ENCODE measurements at regions of chr1 and their contacts with region 1.

Region 1: DNA sequence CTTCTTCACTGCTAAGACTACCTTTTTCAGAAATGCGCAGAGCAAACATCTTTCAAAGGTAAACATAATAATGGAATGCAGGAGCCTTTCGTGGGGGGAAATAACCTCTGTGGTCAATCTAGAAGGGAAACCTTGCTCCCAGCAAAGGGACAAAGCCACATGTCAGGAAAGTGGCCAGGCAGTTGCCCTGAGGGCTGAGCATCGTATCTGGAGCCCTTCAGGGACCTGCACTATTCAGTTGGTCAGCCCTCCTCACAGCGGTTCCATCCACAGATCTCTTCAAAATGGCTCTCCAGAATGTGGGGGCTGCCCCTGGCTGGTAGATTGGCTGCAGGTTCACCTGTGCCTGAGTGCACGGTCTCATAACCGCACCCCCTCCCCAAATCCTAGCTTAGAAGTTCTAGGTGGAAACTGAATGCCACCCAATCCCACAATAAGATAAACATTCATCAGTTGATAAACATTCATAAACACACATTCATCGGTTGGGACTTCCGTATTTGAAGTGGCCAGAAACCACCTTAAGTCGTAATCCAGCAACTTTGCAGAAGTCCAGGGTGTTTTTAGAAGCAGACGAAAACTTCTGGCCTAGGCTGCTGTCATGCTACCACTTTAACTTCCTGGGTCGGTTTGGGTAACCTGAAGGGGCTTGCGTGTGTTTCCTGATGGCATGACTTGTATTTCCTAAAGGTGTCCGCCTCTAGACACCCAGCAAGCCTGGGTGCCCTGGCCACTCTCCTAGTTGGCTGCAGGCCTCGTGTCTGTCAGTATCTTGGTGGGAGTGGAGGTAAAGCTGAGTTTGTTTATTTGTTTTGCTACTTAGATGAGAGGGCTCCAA is 50.5 kb downstream of the RASSF5 start:
- H3K4me3 Mint-ChIP-seq: peak overlapping the region; percentile 93
- H3K27ac Mint-ChIP-seq: peak overlapping the region; percentile 93
- H3K4me1 Mint-ChIP-seq: peaks cover 71% of the 10 kb centered on the region
- H3K27me3 Mint-ChIP-seq: no peaks in the 10 kb centered on the region

Region 2: DNA sequence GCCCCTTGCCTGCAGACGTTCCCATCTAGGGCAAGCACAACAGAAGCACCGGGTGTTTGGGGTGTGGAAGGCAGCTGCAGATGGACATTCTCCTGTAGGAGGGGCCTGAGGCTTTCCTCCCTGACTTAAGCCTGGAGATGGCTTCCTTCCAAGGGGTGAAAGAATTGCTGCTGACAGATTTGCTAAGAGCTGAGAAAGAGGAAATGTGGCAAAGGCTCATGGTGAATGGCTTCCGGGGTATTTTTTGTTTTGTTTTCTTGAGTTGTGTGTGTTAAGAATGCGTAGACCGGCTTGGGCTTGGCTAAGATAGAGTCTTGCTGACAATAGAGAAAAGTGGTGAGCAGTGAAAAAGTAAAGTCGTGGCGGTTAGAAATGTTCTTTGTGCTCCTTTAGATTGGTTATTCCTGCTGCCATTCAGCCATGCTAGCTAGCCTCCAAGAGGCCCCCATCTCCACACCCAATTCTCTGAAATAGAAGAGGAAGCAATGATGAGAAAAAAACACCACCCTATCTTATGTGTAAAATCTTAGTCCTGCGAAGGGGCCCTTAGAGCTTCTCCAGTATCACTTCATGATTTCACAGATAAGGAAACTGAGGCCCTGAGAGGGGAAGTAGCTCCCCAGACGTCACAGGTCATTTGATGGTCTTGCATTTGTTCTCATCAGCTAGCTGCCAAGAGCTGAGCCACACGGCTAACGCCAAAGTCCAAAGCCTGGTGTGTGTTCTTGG is 17.5 kb after region 1 on chr1:
- intact Hi-C with region 1: loop called (anchors 2 kb)
- H3K4me3 Mint-ChIP-seq: peak overlapping the region; percentile 63
- H3K27ac Mint-ChIP-seq: peak overlapping the region; percentile 97
- H3K4me1 Mint-ChIP-seq: peaks cover 98% of the 10 kb centered on the region
- H3K27me3 Mint-ChIP-seq: no peaks in the 10 kb centered on the region